GM12878 (cell line): ENCODE measurements at regions of chr10 and their contacts with region 1.

Region 1: DNA sequence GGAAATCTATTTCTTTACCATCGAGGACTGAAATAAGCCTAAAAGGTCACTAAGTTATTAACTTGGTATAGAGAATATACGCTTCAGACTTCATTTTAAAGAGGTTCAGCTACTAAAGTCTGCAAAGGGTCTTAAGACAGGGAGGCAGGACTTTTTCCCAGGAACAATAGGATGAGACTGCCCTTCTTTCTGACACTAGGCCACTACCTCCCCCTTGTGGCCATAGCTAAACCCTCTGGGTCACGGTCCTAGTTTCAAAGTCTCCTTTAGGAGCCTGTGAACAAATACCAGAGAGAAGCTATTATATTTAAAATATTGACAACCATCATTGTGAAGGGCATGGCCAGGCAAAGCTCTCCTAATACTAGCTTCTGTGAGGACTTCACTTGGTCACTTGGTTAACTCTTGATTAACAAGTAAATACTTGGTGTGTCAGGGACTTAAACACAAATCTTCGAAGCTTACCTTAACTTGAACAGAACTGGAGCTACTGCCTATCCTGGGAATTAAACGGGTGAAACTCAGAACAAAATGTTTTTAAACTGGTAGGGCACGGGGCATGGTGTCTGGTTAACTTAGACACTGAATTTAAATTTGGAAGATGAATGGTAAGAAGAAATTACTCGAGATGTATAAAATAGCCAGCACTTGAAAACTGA is 75.6 kb downstream of the CCDC6 start:
- DNase-seq: no peak
- ATAC-seq: peak; percentile 53
- H3K4me3 ChIP-seq: no peak overlapping the region
- H3K27ac ChIP-seq: no peak overlapping the region
- H3K4me1 ChIP-seq: peaks cover 34% of the 10 kb centered on the region
- H3K27me3 ChIP-seq: no peaks in the 10 kb centered on the region
- CTCF ChIP-seq: peak; percentile 49 to 71 (median 61)
- EP300 ChIP-seq: no peak
- POLR2A ChIP-seq: no peak
- RAD21 ChIP-seq: peak; percentile 55

Region 2: GRCh38 chr10:59844436-59844835 is 13.7 kb after region 1 on chr10:
- CTCF ChIA-PET with region 1: interaction called, 20 read pairs
- POLR2A ChIA-PET with region 1: no interaction called
- RAD21 ChIA-PET with region 1: interaction called, 3 read pairs
- SMC1A ChIA-PET with region 1: interaction called, 8 read pairs
- in situ Hi-C with region 1: no loop called
- intact Hi-C with region 1: no loop called
- DNase-seq: no peak
- ATAC-seq: no peak
- H3K4me3 ChIP-seq: no peak overlapping the region
- H3K27ac ChIP-seq: no peak overlapping the region
- H3K4me1 ChIP-seq: no peaks in the 10 kb centered on the region
- H3K27me3 ChIP-seq: no peaks in the 10 kb centered on the region
- CTCF ChIP-seq: no peak
- EP300 ChIP-seq: no peak
- POLR2A ChIP-seq: no peak
- RAD21 ChIP-seq: no peak

Region 3: GRCh38 chr10:59857049-59857448 is 26.3 kb after region 1 on chr10:
- CTCF ChIA-PET with region 1: interaction called, 14 read pairs
- POLR2A ChIA-PET with region 1: interaction called, 3 read pairs
- RAD21 ChIA-PET with region 1: interaction called, 3 read pairs
- SMC1A ChIA-PET with region 1: interaction called, 14 read pairs
- in situ Hi-C with region 1: no loop called
- intact Hi-C with region 1: no loop called
- DNase-seq: no peak
- ATAC-seq: no peak
- H3K4me3 ChIP-seq: no peak overlapping the region
- H3K27ac ChIP-seq: no peak overlapping the region
- H3K4me1 ChIP-seq: peaks cover 7% of the 10 kb centered on the region; the same call in 1 of the 2 replicates
- H3K27me3 ChIP-seq: no peaks in the 10 kb centered on the region
- CTCF ChIP-seq: no peak
- EP300 ChIP-seq: no peak
- POLR2A ChIP-seq: no peak
- RAD21 ChIP-seq: no peak

Region 4: GRCh38 chr10:59872892-59873463 is 42.2 kb after region 1 on chr10:
- CTCF ChIA-PET with region 1: interaction called, 7 read pairs
- POLR2A ChIA-PET with region 1: interaction called, 9 read pairs
- RAD21 ChIA-PET with region 1: interaction called, 6 read pairs
- SMC1A ChIA-PET with region 1: interaction called, 12 read pairs
- in situ Hi-C with region 1: no loop called
- intact Hi-C with region 1: no loop called
- DNase-seq: no peak
- ATAC-seq: no peak
- H3K4me3 ChIP-seq: no peak overlapping the region
- H3K27ac ChIP-seq: no peak overlapping the region
- H3K4me1 ChIP-seq: peaks cover 26% of the 10 kb centered on the region; the same call in 1 of the 2 replicates
- H3K27me3 ChIP-seq: no peaks in the 10 kb centered on the region
- CTCF ChIP-seq: no peak
- EP300 ChIP-seq: no peak
- POLR2A ChIP-seq: no peak
- RAD21 ChIP-seq: no peak

Region 5: DNA sequence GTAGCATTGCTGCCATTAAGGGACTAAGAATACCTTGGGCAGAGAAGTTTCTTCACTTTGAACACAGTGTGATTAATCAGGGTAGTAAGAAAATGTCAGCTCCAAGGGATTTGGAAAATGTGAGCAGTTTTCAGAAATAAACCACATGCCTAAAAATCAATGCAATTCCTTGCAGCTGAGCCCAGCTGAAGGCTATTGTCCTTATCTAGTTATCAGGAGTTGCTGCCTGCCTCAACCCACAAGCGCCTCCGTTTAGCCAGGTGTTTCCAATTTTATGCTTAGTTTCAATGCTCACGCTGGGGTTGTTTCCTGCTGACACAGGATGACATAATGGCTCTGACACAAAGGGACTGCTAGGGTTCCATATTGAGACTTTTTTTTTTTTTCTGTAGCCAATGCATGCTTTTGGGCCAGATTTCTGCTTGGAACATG is 691.3 kb after region 1 on chr10:
- CTCF ChIA-PET with region 1: no interaction called
- POLR2A ChIA-PET with region 1: no interaction called
- RAD21 ChIA-PET with region 1: no interaction called
- SMC1A ChIA-PET with region 1: no interaction called
- in situ Hi-C with region 1: no loop called
- intact Hi-C with region 1: no loop called
- DNase-seq: no peak
- ATAC-seq: no peak
- H3K4me3 ChIP-seq: no peak overlapping the region
- H3K27ac ChIP-seq: no peak overlapping the region
- H3K4me1 ChIP-seq: no peaks in the 10 kb centered on the region
- H3K27me3 ChIP-seq: no peaks in the 10 kb centered on the region
- CTCF ChIP-seq: no peak
- EP300 ChIP-seq: no peak
- POLR2A ChIP-seq: no peak
- RAD21 ChIP-seq: no peak

Region 6: DNA sequence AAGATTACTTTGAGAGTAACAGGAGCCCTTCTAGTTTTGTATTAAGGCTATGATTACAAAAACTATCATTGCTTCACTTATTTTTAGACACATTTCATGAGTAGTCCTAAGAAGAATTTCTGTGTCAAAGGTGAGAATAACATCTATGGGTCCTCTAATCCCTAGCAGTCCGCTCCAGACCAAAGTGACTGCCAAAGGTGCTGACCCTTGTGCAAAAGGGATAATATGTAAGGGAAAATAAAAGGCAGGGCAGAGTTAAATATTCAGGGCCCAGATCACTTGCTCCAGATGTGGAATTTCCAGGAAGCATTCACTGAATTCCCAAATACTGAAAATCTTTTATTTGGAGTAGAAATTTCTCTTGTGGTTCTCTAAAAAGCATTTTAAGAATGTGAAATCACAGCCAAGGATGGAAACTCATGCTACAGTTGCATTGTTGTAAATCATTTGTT is 1084.0 kb after region 1 on chr10:
- CTCF ChIA-PET with region 1: no interaction called
- POLR2A ChIA-PET with region 1: no interaction called
- RAD21 ChIA-PET with region 1: no interaction called
- SMC1A ChIA-PET with region 1: no interaction called
- in situ Hi-C with region 1: no loop called
- intact Hi-C with region 1: no loop called
- DNase-seq: no peak
- ATAC-seq: no peak
- H3K4me3 ChIP-seq: no peak overlapping the region
- H3K27ac ChIP-seq: no peak overlapping the region
- H3K4me1 ChIP-seq: no peaks in the 10 kb centered on the region
- H3K27me3 ChIP-seq: no peaks in the 10 kb centered on the region
- CTCF ChIP-seq: no peak
- EP300 ChIP-seq: no peak
- POLR2A ChIP-seq: no peak
- RAD21 ChIP-seq: no peak